ENCODE measurements at regions of chr6 and their contacts with region 1.

Region 1: GRCh38 chr6:41920921-41921711 is at the starts of genes BYSL and MED20:
- DNase-seq: peak; percentile 96
- H3K4me3 Mint-ChIP-seq: peak within 1 kb of the TSS; percentile 99
- H3K27ac Mint-ChIP-seq: peak within 1 kb of the TSS; percentile 99
- H3K4me1 Mint-ChIP-seq: peaks cover 41% of the 10 kb centered on the region
- H3K27me3 Mint-ChIP-seq: no peaks in the 10 kb centered on the region
- CTCF ChIP-seq: peak; percentile 98
- total RNA-seq, gene BYSL: 51.7 and 55.6 TPM in 2 replicates
- total RNA-seq, gene MED20: 28.0 and 29.8 TPM in 2 replicates

Region 2: GRCh38 chr6:41826347-41827022 is 94.6 kb before region 1 on chr6:
- CTCF ChIA-PET with region 1: no interaction called
- intact Hi-C with region 1: no loop called
- DNase-seq: no peak
- H3K4me3 Mint-ChIP-seq: no peak overlapping the region
- H3K27ac Mint-ChIP-seq: no peak overlapping the region
- H3K4me1 Mint-ChIP-seq: peaks cover 12% of the 10 kb centered on the region
- H3K27me3 Mint-ChIP-seq: no peaks in the 10 kb centered on the region
- CTCF ChIP-seq: no peak

Region 3: GRCh38 chr6:41895300-41896233 is 25.5 kb before region 1 on chr6 and contains the start of gene USP49:
- CTCF ChIA-PET with region 1: interaction called, 17 read pairs
- intact Hi-C with region 1: no loop called
- DNase-seq: peak; percentile 94
- H3K4me3 Mint-ChIP-seq: no peak within 1 kb of the TSS
- H3K27ac Mint-ChIP-seq: no peak within 1 kb of the TSS
- H3K4me1 Mint-ChIP-seq: peaks cover 9% of the 10 kb centered on the region
- H3K27me3 Mint-ChIP-seq: no peaks in the 10 kb centered on the region
- CTCF ChIP-seq: no peak
- total RNA-seq, gene USP49: 6.9 and 7.0 TPM in 2 replicates

Region 4: GRCh38 chr6:41941280-41942066 is 20.4 kb after region 1 on chr6 and contains the start of gene CCND3:
- CTCF ChIA-PET with region 1: interaction called, 17 read pairs
- intact Hi-C with region 1: loop called (anchors 2 kb)
- DNase-seq: peak; percentile 96
- H3K4me3 Mint-ChIP-seq: peak within 1 kb of the TSS; percentile 100
- H3K27ac Mint-ChIP-seq: peak within 1 kb of the TSS; percentile 93
- H3K4me1 Mint-ChIP-seq: peaks cover 26% of the 10 kb centered on the region
- H3K27me3 Mint-ChIP-seq: no peaks in the 10 kb centered on the region
- CTCF ChIP-seq: no peak
- total RNA-seq, gene CCND3: 77.4 and 90.4 TPM in 2 replicates

Region 5: DNA sequence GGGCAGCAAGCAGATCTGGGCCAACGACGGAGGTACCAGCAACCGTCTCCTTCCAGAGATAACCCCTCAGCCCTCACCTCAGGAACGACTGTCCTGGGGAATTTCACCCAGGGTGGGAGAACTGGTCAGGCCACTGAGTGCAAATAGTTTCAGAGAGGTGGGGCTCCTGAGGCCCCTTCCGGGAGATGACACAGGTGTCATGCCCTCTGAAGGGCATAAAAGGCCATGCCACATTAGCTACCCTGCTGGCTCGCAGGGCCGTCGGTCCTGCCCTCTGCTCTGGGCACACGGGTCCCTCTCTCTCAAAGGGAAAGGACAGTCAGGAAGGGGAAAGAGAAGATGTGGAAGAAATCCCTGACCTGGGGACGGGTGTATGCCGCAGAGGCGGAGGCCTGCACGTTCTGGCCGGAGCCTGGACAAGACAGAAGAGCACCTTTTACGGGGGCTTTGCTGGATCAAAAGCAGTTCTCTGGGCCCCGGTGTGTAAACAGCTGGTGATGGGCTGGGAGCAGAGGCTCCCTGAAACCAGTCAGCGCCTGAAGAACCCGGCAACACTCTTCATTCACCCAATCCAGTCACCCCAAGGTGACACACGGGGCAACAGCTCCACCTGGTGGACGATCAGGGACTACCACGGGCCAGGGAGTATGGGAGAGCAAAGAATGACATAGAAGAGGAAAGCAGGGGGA is 122.8 kb after region 1 on chr6:
- CTCF ChIA-PET with region 1: interaction called, 10 read pairs
- intact Hi-C with region 1: loop called (anchors 5 kb)
- DNase-seq: peak; percentile 95
- H3K4me3 Mint-ChIP-seq: no peak overlapping the region
- H3K27ac Mint-ChIP-seq: peak overlapping the region; percentile 50
- H3K4me1 Mint-ChIP-seq: peaks cover 44% of the 10 kb centered on the region
- H3K27me3 Mint-ChIP-seq: no peaks in the 10 kb centered on the region
- CTCF ChIP-seq: peak; percentile 95